Naive thymus-derived CD4-positive, alpha-beta T cell (primary cell): ENCODE measurements at regions of chr11 and their contacts with region 1.

Region 1: GRCh38 chr11:66694732-66695207 is 17.1 kb upstream of the RBM4B start:
- DNase-seq: peak; percentile 56 to 83 (median 77)
- ATAC-seq: peak; percentile 97
- H3K4me3 ChIP-seq: no peak overlapping the region
- H3K4me3 Mint-ChIP-seq: no peak overlapping the region
- H3K27ac ChIP-seq: no peak overlapping the region
- H3K27ac Mint-ChIP-seq: no peak overlapping the region
- H3K4me1 ChIP-seq: no peaks in the 10 kb centered on the region
- H3K4me1 Mint-ChIP-seq: peaks cover 0 to 5% (median 0%) of the 10 kb centered on the region in 7 donors
- H3K27me3 ChIP-seq: no peaks in the 10 kb centered on the region
- H3K27me3 Mint-ChIP-seq: peaks cover 0 to 4% (median 0%) of the 10 kb centered on the region in 5 donors

Region 2: DNA sequence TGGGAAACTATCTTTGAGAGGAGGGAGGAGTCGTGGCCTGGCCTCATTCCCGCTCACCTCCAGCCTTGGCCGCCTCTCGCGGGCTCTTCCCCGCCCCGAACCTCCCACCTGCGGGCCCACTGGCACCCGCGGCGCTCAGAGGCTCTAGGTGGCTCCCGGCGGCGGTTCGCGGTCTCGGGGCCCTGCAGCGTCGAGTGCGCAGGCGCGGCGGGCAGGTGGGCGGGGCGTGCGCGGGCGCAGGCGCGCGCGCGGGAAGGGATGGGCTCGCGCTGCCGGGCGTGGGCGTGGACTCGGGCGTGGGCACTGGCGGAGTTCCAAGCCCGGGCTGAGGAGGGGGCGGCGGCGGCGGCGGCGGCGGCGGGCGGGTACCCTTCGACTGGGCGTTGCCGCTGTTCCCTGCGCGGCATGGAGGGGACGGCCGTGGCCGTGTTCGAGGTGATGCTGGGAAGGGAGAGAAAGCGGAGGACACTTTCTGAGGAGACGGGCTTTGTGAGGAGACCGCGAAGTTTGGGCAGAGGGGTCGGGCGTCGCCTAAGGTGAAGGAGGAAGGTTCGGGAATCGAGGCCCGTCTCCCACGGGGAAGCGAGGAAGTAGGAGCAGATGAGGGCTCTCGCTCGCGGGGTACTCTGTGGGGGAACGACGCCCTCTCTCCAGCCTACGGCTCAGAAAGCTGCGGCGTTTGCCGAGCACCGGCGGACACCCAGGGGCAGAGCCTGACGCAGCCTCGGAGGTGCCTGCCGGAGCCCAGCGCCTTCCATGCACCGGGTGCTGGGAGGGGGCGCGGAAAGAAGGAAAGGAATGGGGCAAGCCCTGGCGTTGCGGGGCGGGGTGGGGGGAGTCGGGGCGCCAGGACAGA is 49.9 kb after region 1 on chr11:
- CTCF ChIA-PET with region 1: interaction called, 3 read pairs
- POLR2A ChIA-PET with region 1: no interaction called
- intact Hi-C with region 1: loop called in 1 of 2 experiments (anchors 5 kb)
- DNase-seq: peak; percentile 83 to 98 (median 91)
- ATAC-seq: peak; percentile 97
- H3K4me3 ChIP-seq: peak overlapping the region; percentile 83
- H3K4me3 Mint-ChIP-seq: peak overlapping the region; percentile 82 to 97 (median 94)
- H3K27ac ChIP-seq: peak overlapping the region; percentile 89
- H3K27ac Mint-ChIP-seq: peak overlapping the region; percentile 18 to 89 (median 81)
- H3K4me1 ChIP-seq: peaks cover 0 to 3% of the 10 kb centered on the region in 2 donors
- H3K4me1 Mint-ChIP-seq: peaks cover 0 to 16% (median 4%) of the 10 kb centered on the region in 7 donors
- H3K27me3 ChIP-seq: no peaks in the 10 kb centered on the region
- H3K27me3 Mint-ChIP-seq: peaks cover 0 to 10% (median 0%) of the 10 kb centered on the region in 5 donors

Region 3: DNA sequence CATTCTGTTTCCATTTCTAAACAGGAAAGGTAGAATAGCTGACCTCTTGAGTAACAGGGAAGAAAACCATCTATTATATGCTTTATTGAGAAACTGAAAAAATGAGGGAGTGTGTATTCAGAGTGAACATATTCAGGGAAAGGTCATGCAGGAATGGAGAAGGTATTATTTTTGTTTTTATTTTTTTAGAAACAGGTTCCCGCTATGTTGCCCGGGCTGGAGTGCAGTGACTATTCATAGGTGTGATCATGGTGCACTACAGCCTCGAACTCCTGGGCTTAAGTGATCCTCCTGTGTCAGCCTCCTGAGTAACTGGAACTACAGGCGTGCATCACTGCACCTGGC is 139.7 kb after region 1 on chr11:
- CTCF ChIA-PET with region 1: interaction called, 29 read pairs
- POLR2A ChIA-PET with region 1: interaction called, 5 read pairs
- intact Hi-C with region 1: loop called (anchors 1 kb)
- DNase-seq: no peak
- ATAC-seq: no peak
- H3K4me3 ChIP-seq: no peak overlapping the region
- H3K4me3 Mint-ChIP-seq: no peak overlapping the region
- H3K27ac ChIP-seq: peak overlapping the region; percentile 6
- H3K27ac Mint-ChIP-seq: peak overlapping the region in 8 of 9 donors; percentile 22 to 92 (median 62)
- H3K4me1 ChIP-seq: peaks cover 3 to 6% of the 10 kb centered on the region in 2 donors
- H3K4me1 Mint-ChIP-seq: peaks cover 0 to 23% (median 18%) of the 10 kb centered on the region in 7 donors
- H3K27me3 ChIP-seq: no peaks in the 10 kb centered on the region
- H3K27me3 Mint-ChIP-seq: no peaks in the 10 kb centered on the region

Region 4: GRCh38 chr11:66868726-66869566 is 174.2 kb after region 1 on chr11:
- CTCF ChIA-PET with region 1: interaction called, 3 read pairs
- POLR2A ChIA-PET with region 1: no interaction called
- intact Hi-C with region 1: loop called in 1 of 2 experiments (anchors 1 kb)
- DNase-seq: peak; percentile 42 to 76 (median 63)
- ATAC-seq: peak; percentile 97
- H3K4me3 ChIP-seq: no peak overlapping the region
- H3K4me3 Mint-ChIP-seq: peak overlapping the region in 2 of 10 donors; percentile 25 to 28
- H3K27ac ChIP-seq: no peak overlapping the region
- H3K27ac Mint-ChIP-seq: peak overlapping the region in 1 of 9 donors; percentile 9
- H3K4me1 ChIP-seq: peaks cover 0 to 7% of the 10 kb centered on the region in 2 donors
- H3K4me1 Mint-ChIP-seq: peaks cover 0 to 13% (median 5%) of the 10 kb centered on the region in 7 donors
- H3K27me3 ChIP-seq: no peaks in the 10 kb centered on the region
- H3K27me3 Mint-ChIP-seq: no peaks in the 10 kb centered on the region

Region 5: DNA sequence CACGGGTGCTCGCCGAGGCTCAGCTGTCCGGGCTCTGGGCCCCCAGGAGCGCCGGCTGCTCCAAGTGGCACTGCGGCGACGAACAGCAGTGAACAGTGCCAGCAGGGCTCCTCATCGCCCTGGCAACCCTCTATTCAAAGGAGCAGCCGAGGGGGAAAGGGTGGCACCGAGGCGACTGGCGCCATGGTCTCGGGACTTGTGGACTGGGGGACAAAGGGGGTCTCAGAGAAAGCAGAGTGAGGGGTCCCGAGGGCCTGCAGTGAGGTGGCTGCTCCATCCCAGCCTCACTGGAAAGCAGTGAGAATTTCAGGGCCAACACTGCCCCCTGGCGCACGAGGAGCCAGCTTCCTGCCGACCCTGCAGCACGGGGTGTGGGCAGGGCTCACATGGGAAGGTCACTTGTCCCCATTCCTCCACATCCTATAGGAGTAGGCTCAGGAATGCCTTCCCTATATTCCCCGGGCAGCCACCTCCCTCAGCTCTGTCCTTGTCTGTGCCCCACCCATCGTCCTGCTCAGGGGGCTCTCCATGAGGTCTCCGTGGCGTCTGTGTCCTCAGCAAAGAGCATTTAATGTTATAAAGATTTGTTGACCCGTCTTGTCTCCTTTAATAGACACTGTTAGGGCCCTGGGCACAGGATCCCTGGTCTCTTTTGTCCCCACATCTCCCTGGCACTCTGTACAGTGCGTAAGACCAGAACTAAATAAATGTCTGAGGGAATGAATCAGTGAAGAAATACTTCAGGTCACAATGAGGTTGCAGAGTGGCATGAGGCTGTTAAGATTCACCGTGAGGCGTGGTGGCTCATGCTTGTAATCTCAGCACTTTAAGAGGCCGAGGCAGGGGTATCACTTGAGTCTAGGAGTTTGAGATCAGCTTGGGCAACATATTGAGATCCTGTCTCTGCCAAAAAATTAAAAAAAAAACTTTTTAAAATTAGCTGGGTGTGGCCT is 188.5 kb after region 1 on chr11:
- CTCF ChIA-PET with region 1: interaction called, 4 read pairs
- POLR2A ChIA-PET with region 1: no interaction called
- intact Hi-C with region 1: loop called (anchors 1 kb)
- DNase-seq: peak in 8 of 9 donors; percentile 37 to 68 (median 48)
- ATAC-seq: peak; percentile 72
- H3K4me3 ChIP-seq: no peak overlapping the region
- H3K4me3 Mint-ChIP-seq: no peak overlapping the region
- H3K27ac ChIP-seq: no peak overlapping the region
- H3K27ac Mint-ChIP-seq: no peak overlapping the region
- H3K4me1 ChIP-seq: peaks cover 0 to 15% of the 10 kb centered on the region in 2 donors
- H3K4me1 Mint-ChIP-seq: peaks cover 8 to 29% (median 20%) of the 10 kb centered on the region in 7 donors
- H3K27me3 ChIP-seq: no peaks in the 10 kb centered on the region
- H3K27me3 Mint-ChIP-seq: no peaks in the 10 kb centered on the region

Region 6: DNA sequence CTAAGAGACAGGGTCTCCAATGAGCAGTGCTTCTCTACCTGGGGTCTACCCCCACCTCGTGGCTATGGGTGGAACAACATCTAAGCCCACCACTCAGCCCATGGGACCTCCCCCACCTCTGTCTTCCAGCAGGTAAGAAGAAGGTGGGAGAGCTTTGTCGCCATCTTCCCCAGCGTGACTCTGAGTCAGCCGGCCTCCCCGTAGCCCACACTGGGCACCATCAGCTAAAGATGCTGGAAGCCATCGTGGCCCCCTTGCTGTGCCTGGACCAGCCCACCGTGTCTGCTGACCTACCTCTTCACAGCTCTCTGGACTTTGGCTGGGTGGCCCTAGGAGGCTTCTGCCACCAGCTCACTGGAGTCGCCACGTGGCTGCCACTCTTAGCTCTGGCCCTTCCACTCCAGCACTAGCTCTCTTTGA is 281.3 kb after region 1 on chr11:
- CTCF ChIA-PET with region 1: no interaction called
- POLR2A ChIA-PET with region 1: no interaction called
- intact Hi-C with region 1: loop called in 1 of 2 experiments (anchors 1 kb)
- DNase-seq: peak in 4 of 9 donors; percentile 8 to 28 (median 11)
- ATAC-seq: peak; percentile 37
- H3K4me3 ChIP-seq: no peak overlapping the region
- H3K4me3 Mint-ChIP-seq: no peak overlapping the region
- H3K27ac ChIP-seq: no peak overlapping the region
- H3K27ac Mint-ChIP-seq: no peak overlapping the region
- H3K4me1 ChIP-seq: no peaks in the 10 kb centered on the region
- H3K4me1 Mint-ChIP-seq: peaks cover 0 to 4% (median 0%) of the 10 kb centered on the region in 7 donors
- H3K27me3 ChIP-seq: no peaks in the 10 kb centered on the region
- H3K27me3 Mint-ChIP-seq: peaks cover 0 to 16% (median 9%) of the 10 kb centered on the region in 5 donors